ENCODE measurements at regions of chr17 and their contacts with region 1.

Region 1: GRCh38 chr17:42132941-42133340 is 10.3 kb downstream of the HSPB9 start:
- DNase-seq: peak in 1 of 2 donors; percentile 63
- ATAC-seq: peak; percentile 80 to 98 (median 88)
- H3K4me3 ChIP-seq: peak overlapping the region; percentile 29
- H3K27ac ChIP-seq: peak overlapping the region; percentile 59
- H3K4me1 ChIP-seq: peaks cover 82% of the 10 kb centered on the region
- H3K27me3 ChIP-seq: no peaks in the 10 kb centered on the region
- CTCF ChIP-seq: no peak

Region 2: DNA sequence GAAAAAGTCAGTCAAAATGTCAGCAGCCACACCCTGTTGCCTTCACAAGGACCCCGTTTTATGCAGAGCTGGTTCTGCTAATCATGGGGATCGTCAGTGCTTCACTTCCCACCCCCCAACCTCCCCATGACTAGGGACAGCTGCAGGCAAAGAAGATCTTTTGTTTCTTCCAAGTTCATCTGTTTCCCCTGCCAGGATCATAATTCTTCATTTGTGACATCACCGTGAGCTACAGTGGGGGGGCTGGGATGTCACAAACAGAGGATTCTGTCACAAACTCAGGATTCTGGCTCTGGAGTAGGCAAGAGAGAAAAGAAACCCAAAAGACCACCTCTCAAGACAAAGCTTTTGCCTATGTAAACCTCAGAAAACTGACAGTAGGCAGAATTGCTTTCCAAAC is 140.4 kb before region 1 on chr17:
- intact Hi-C with region 1: no loop called
- DNase-seq: no peak
- ATAC-seq: peak in 2 of 4 donors; percentile 43 to 59
- H3K4me3 ChIP-seq: no peak overlapping the region
- H3K27ac ChIP-seq: peak overlapping the region; percentile 46
- H3K4me1 ChIP-seq: peaks cover 7% of the 10 kb centered on the region
- H3K27me3 ChIP-seq: no peaks in the 10 kb centered on the region
- CTCF ChIP-seq: no peak

Region 3: GRCh38 chr17:42171831-42172230 is 38.9 kb after region 1 on chr17:
- intact Hi-C with region 1: no loop called
- DNase-seq: no peak
- ATAC-seq: no peak
- H3K4me3 ChIP-seq: no peak overlapping the region
- H3K27ac ChIP-seq: no peak overlapping the region
- H3K4me1 ChIP-seq: no peaks in the 10 kb centered on the region
- H3K27me3 ChIP-seq: no peaks in the 10 kb centered on the region
- CTCF ChIP-seq: no peak

Region 4: DNA sequence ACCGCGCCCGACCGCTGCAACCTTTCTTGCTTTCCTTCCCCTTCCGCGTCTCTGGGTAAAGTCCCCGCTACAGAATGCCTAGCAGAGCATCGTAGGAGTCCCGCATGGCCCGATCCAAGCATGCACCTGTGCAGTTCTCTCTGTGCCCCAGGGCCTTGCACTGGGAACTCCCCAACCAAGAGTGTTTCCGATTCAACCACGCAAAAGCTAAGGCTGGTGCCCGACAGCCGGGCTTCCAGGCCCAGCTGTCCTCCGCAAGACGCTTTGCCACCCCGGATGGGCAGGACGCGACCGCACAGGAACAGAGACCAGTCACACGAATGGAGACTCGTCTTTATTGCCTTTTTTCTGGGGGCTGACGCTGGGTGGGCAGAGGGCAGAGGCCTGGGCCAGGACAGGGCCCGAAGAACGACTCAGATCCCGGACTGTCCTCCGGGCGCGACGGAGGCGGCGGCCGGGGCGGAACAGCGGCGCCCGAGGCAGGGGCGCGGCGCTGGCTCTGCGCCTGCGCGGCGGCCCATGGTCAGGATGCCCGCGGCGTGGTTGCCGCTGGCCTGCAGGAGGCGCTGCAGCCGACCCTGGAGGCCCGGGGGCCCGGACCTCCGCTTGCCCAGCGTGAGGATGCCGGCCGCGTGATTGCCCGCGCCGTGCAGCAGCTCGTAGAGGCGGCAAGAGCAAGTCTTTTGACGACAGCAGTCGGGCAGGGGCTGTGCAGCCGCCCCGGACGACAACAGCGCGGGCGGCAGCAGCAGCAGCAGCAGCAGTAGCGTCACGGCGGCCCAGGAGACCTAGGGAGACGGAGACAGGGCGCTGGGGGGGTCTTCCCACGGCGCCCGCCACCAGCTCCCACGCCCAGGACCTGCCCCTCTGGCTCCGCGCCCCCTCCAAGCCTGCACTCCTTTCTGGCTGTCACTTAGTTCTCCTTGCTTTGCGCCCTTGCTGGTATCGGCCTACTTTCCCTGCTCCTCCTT is 51.1 kb after region 1 on chr17:
- intact Hi-C with region 1: loop called in 1 of 2 experiments (anchors 5 kb)
- DNase-seq: peak; percentile 80 to 89
- ATAC-seq: peak; percentile 75 to 86 (median 82)
- H3K4me3 ChIP-seq: peak overlapping the region; percentile 69
- H3K27ac ChIP-seq: peak overlapping the region; percentile 55
- H3K4me1 ChIP-seq: peaks cover 18% of the 10 kb centered on the region
- H3K27me3 ChIP-seq: peaks cover 0 to 32% (median 7%) of the 10 kb centered on the region in 3 donors
- CTCF ChIP-seq: peak; percentile 75

Region 5: DNA sequence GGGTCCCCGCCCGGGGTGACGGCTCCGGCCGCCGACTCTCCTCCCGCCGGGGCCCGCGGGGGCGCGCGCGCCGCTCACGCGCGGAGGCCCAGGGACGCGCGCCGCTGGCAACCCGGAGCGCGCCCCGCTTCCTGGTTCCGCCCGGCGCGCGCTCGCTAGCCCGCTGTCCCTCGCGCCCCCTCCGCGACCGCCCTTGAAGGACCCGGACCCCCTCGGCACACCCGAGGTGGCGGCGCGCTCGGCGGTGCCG is 143.3 kb after region 1 on chr17 and contains the start of gene STAT5B:
- intact Hi-C with region 1: loop called in 1 of 2 experiments (anchors 10 kb)
- DNase-seq: peak; percentile 81 to 87
- ATAC-seq: peak; percentile 85 to 87 (median 86)
- H3K4me3 ChIP-seq: peak within 1 kb of the TSS; percentile 93
- H3K27ac ChIP-seq: peak within 1 kb of the TSS; percentile 89
- H3K4me1 ChIP-seq: peaks cover 45% of the 10 kb centered on the region
- H3K27me3 ChIP-seq: no peaks in the 10 kb centered on the region
- CTCF ChIP-seq: no peak
- total RNA-seq, gene STAT5B: 68.8 to 90.1 (median 81.6) TPM